Activated CD4-positive, alpha-beta T cell treated with anti-CD3 and anti-CD28 coated beads for 36 hours (primary cell): ENCODE measurements at regions of chr12 and their contacts with region 1.

Region 1: DNA sequence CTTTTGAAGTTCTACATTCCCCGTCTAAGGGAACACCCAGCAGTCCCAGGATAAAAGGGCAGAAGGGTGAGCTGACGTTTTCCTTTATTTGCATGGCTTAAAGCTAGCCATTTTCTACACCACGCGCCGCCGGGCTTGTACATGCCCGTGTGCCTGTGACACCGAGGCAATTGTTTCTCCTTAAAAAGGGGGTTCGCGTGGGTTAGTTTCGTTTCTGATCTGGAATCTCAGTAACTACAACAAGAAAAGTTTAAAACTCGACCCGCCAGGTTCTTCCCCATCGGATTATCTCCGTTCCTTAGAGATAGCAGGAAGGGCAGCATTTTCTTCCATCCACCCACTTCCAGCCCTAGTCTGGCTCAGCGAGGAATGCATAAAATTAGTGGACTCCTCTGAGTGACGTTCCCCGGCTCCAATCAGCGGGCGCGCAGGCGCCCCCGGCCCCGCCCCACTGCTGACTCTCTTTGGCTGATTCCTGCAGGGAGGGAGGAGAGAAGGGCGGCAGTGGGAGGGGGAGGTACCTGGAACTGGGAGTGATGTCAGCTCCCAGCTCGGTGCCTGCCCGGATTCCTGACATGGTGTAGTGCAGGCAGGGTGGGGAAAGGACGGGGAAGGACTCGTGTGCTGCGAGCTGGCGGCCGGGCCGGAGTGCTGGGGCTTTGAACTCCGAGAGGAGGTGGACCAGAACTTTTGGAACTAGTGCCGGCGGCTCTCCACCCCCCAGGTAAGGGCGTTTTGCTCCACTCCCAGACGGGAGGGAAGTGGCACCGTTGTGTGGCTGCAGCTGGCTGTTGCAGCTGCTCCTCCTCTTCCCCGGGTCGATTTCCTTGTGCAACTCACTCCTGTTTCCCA is at the start of gene PPFIBP1:
- DNase-seq: peak; percentile 98
- ATAC-seq: peak; percentile 99
- H3K4me3 Mint-ChIP-seq: peak within 1 kb of the TSS; percentile 91
- H3K27ac Mint-ChIP-seq: peak within 1 kb of the TSS; percentile 87
- H3K4me1 Mint-ChIP-seq: peaks cover 19% of the 10 kb centered on the region
- H3K27me3 Mint-ChIP-seq: peaks cover 19% of the 10 kb centered on the region
- total RNA-seq, gene PPFIBP1: 14.9 to 15.6 TPM

Region 2: GRCh38 chr12:27024291-27024690 is 499.6 kb before region 1 on chr12:
- CTCF ChIA-PET with region 1: no interaction called
- POLR2A ChIA-PET with region 1: no interaction called
- intact Hi-C with region 1: loop called in 1 of 2 experiments (anchors 5 kb)
- DNase-seq: no peak
- ATAC-seq: no peak
- H3K4me3 Mint-ChIP-seq: peak overlapping the region; percentile 96
- H3K27ac Mint-ChIP-seq: no peak overlapping the region
- H3K4me1 Mint-ChIP-seq: peaks cover 30% of the 10 kb centered on the region
- H3K27me3 Mint-ChIP-seq: peaks cover 4% of the 10 kb centered on the region

Region 3: GRCh38 chr12:27343255-27344000 is 180.4 kb before region 1 on chr12:
- CTCF ChIA-PET with region 1: no interaction called
- POLR2A ChIA-PET with region 1: no interaction called
- intact Hi-C with region 1: no loop called
- DNase-seq: no peak
- ATAC-seq: no peak
- H3K4me3 Mint-ChIP-seq: no peak overlapping the region
- H3K27ac Mint-ChIP-seq: no peak overlapping the region
- H3K4me1 Mint-ChIP-seq: peaks cover 3% of the 10 kb centered on the region
- H3K27me3 Mint-ChIP-seq: peaks cover 4% of the 10 kb centered on the region

Region 4: DNA sequence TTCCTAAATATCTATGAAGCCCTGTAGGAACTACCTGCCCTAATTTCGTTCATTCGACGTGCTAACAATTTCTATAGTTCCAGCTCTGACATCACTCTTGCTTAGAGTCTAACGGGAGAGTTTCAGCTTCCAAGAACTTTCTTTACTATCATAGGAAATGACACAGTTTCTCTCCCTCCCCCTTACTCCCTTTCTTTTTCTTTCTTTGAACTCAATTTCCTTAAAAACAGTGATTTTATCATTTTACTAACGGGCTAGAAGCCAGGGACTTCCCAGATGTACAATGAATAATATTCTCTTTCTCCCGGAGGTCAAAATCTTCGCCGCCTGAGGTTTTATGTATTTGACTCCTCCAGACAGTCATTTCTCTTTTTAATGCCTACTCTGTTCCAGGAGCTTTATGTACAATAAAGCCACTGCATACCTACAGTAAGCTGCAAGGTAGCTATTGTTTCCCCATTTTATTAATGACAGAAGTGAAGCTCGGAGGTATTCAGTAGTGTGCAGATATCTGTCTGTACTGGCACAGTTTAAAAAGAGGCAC is 61.6 kb before region 1 on chr12:
- CTCF ChIA-PET with region 1: interaction called, 3 read pairs
- POLR2A ChIA-PET with region 1: interaction called, 3 read pairs
- intact Hi-C with region 1: loop called in 1 of 2 experiments (anchors 2 kb)
- DNase-seq: peak; percentile 35
- ATAC-seq: peak; percentile 51
- H3K4me3 Mint-ChIP-seq: no peak overlapping the region
- H3K27ac Mint-ChIP-seq: no peak overlapping the region
- H3K4me1 Mint-ChIP-seq: peaks cover 54% of the 10 kb centered on the region
- H3K27me3 Mint-ChIP-seq: peaks cover 14% of the 10 kb centered on the region

Region 5: GRCh38 chr12:27534060-27534764 is 10.3 kb after region 1 on chr12:
- CTCF ChIA-PET with region 1: interaction called, 8 read pairs
- POLR2A ChIA-PET with region 1: interaction called, 3 read pairs
- intact Hi-C with region 1: loop called in 1 of 2 experiments (anchors 1 kb)
- DNase-seq: peak; percentile 50
- ATAC-seq: peak; percentile 84
- H3K4me3 Mint-ChIP-seq: peak overlapping the region; percentile 3
- H3K27ac Mint-ChIP-seq: peak overlapping the region; percentile 38
- H3K4me1 Mint-ChIP-seq: peaks cover 38% of the 10 kb centered on the region
- H3K27me3 Mint-ChIP-seq: no peaks in the 10 kb centered on the region

Region 6: DNA sequence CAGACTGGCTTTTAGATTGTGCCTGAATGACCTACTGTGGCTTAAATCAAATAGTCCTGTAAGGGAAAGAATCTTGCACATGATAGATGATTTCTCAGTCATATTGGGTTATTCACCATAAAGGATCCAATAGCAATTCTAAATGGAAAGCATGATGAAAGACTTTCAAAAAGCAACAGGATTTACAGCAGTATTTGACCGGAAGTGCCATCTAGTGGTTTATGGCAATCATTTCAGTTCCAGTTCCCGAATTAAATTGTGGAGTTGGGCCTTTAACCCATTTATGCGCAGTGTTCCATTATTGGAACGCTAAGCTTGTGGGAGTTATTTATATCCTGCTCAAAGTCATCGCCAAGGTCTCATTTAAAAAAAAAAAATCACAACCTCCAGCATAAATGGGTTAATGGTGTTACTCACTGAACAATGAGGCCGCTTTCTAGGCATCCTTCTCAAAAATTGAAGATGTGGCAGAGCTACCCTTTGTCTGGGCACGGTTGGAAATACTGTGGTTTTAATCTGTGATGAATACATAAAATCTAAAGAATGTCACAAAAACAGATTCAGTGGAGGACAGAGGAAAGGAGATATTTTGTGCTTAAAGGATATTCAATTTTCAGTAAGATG is 111.6 kb after region 1 on chr12:
- CTCF ChIA-PET with region 1: interaction called, 3 read pairs
- POLR2A ChIA-PET with region 1: no interaction called
- intact Hi-C with region 1: loop called in 1 of 2 experiments (anchors 2 kb)
- DNase-seq: no peak
- ATAC-seq: peak; percentile 26
- H3K4me3 Mint-ChIP-seq: no peak overlapping the region
- H3K27ac Mint-ChIP-seq: no peak overlapping the region
- H3K4me1 Mint-ChIP-seq: peaks cover 2% of the 10 kb centered on the region
- H3K27me3 Mint-ChIP-seq: no peaks in the 10 kb centered on the region